Activated B cell treated with CpG ODN at 0.5 μM for 24 hours (primary cell): ENCODE measurements at regions of chr14 and their contacts with region 1.

Region 1: GRCh38 chr14:51901475-51902024 is 41.1 kb downstream of the GNG2 start:
- DNase-seq: no peak
- ATAC-seq: no peak
- H3K4me3 Mint-ChIP-seq: no peak overlapping the region
- H3K27ac Mint-ChIP-seq: peak overlapping the region; percentile 5
- H3K4me1 Mint-ChIP-seq: peaks cover 49% of the 10 kb centered on the region
- H3K27me3 Mint-ChIP-seq: no peaks in the 10 kb centered on the region
- CTCF ChIP-seq: no peak

Region 2: GRCh38 chr14:51828017-51828797 is 73.3 kb before region 1 on chr14:
- CTCF ChIA-PET with region 1: no interaction called
- POLR2A ChIA-PET with region 1: interaction called, 7 read pairs
- intact Hi-C with region 1: loop called (anchors 1 kb)
- DNase-seq: peak; percentile 64
- ATAC-seq: peak; percentile 99
- H3K4me3 Mint-ChIP-seq: no peak overlapping the region
- H3K27ac Mint-ChIP-seq: peak overlapping the region; percentile 6
- H3K4me1 Mint-ChIP-seq: no peaks in the 10 kb centered on the region
- H3K27me3 Mint-ChIP-seq: no peaks in the 10 kb centered on the region
- CTCF ChIP-seq: no peak

Region 3: GRCh38 chr14:51873221-51873893 is 28.2 kb before region 1 on chr14:
- CTCF ChIA-PET with region 1: no interaction called
- POLR2A ChIA-PET with region 1: interaction called, 6 read pairs
- intact Hi-C with region 1: loop called (anchors 1 kb)
- DNase-seq: no peak
- ATAC-seq: peak; percentile 79
- H3K4me3 Mint-ChIP-seq: peak overlapping the region; percentile 50
- H3K27ac Mint-ChIP-seq: peak overlapping the region; percentile 89
- H3K4me1 Mint-ChIP-seq: peaks cover 56% of the 10 kb centered on the region
- H3K27me3 Mint-ChIP-seq: no peaks in the 10 kb centered on the region
- CTCF ChIP-seq: no peak

Region 4: GRCh38 chr14:51921026-51921425 is 19.5 kb after region 1 on chr14:
- CTCF ChIA-PET with region 1: interaction called, 3 read pairs
- POLR2A ChIA-PET with region 1: interaction called, 3 read pairs
- intact Hi-C with region 1: loop called (anchors 2 kb)
- DNase-seq: no peak
- ATAC-seq: no peak
- H3K4me3 Mint-ChIP-seq: no peak overlapping the region
- H3K27ac Mint-ChIP-seq: no peak overlapping the region
- H3K4me1 Mint-ChIP-seq: peaks cover 40% of the 10 kb centered on the region
- H3K27me3 Mint-ChIP-seq: no peaks in the 10 kb centered on the region
- CTCF ChIP-seq: no peak

Region 5: GRCh38 chr14:51979088-51979709 is 77.6 kb after region 1 on chr14:
- CTCF ChIA-PET with region 1: no interaction called
- POLR2A ChIA-PET with region 1: no interaction called
- intact Hi-C with region 1: loop called (anchors 2 kb)
- DNase-seq: peak; percentile 68
- ATAC-seq: peak; percentile 75
- H3K4me3 Mint-ChIP-seq: no peak overlapping the region
- H3K27ac Mint-ChIP-seq: no peak overlapping the region
- H3K4me1 Mint-ChIP-seq: peaks cover 6% of the 10 kb centered on the region
- H3K27me3 Mint-ChIP-seq: no peaks in the 10 kb centered on the region
- CTCF ChIP-seq: peak; percentile 37

Region 6: DNA sequence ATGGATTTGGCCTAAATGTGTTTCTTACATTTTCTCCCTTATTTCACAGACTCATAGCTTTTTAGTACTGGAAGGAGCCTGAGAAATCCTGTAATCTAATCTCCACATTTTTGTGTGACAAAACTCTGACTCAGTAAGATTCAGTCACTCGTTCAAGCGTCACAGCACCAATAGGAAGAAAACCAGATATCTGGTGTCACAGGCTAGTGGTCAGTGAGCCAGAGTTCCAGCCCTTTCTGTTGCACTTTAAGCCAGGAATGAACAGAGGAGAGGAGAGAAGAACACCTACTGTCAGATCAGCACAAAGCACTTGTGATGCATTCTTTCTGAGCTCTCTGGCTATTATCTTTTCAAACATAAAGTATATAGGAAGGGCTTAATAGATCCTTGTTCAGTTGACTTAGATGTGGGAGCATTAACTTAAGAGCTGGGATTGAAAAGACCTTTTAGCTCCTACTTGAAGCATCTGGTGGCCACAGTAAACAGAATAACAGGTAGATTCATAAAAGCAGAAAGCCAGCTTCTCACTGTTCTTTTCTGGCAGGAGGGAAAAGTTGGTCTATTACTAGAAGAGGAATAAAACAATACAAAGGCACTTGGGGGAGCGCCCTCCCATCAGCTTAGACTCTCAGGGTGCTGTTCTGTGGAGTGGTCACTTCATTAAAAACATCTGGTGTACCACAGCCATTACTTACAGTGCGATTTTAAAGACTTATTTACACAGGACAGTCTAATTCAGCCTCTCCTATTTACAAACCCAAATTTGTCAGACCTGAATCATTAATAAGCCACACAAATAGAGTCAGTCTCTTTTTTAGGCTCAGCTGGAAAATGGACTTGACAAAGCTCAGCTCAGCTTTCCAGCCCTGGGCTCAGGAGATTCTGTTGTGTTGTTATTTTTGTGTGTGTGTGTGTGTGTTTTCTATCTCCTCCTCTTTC is 179.5 kb after region 1 on chr14:
- CTCF ChIA-PET with region 1: no interaction called
- POLR2A ChIA-PET with region 1: no interaction called
- intact Hi-C with region 1: no loop called
- DNase-seq: no peak
- ATAC-seq: no peak
- H3K4me3 Mint-ChIP-seq: no peak overlapping the region
- H3K27ac Mint-ChIP-seq: no peak overlapping the region
- H3K4me1 Mint-ChIP-seq: no peaks in the 10 kb centered on the region
- H3K27me3 Mint-ChIP-seq: peaks cover 23% of the 10 kb centered on the region
- CTCF ChIP-seq: no peak

Region 7: GRCh38 chr14:52729925-52730667 is 828.5 kb after region 1 on chr14 and contains the start of gene STYX:
- CTCF ChIA-PET with region 1: no interaction called
- POLR2A ChIA-PET with region 1: no interaction called
- intact Hi-C with region 1: loop called (anchors 1 kb)
- DNase-seq: peak; percentile 95
- ATAC-seq: peak; percentile 96
- H3K4me3 Mint-ChIP-seq: peak within 1 kb of the TSS; percentile 94
- H3K27ac Mint-ChIP-seq: peak within 1 kb of the TSS; percentile 89
- H3K4me1 Mint-ChIP-seq: peaks cover 46% of the 10 kb centered on the region
- H3K27me3 Mint-ChIP-seq: no peaks in the 10 kb centered on the region
- CTCF ChIP-seq: no peak
- total RNA-seq, gene STYX: 13.1 and 13.5 TPM in 2 replicates